Dendritic cell treated with granulocyte-macrophage colony-stimulating factor and Interleukin-4, amounts not matched to agents 40 ng/mL and 50 ng/mL, for 4 days (primary cell): ENCODE measurements at regions of chr12 and their contacts with region 1.

Region 1: GRCh38 chr12:111685744-111686517 is at the starts of genes ACAD10 and BRAP:
- H3K4me3 Mint-ChIP-seq: peak within 1 kb of the TSS; percentile 95
- H3K27ac Mint-ChIP-seq: peak within 1 kb of the TSS; percentile 96
- H3K4me1 Mint-ChIP-seq: peaks cover 24% of the 10 kb centered on the region
- H3K27me3 Mint-ChIP-seq: no peaks in the 10 kb centered on the region

Region 2: GRCh38 chr12:111505601-111506036 is 180.3 kb before region 1 on chr12:
- intact Hi-C with region 1: no loop called
- H3K4me3 Mint-ChIP-seq: no peak overlapping the region
- H3K27ac Mint-ChIP-seq: no peak overlapping the region
- H3K4me1 Mint-ChIP-seq: no peaks in the 10 kb centered on the region
- H3K27me3 Mint-ChIP-seq: no peaks in the 10 kb centered on the region

Region 3: GRCh38 chr12:111599459-111600204 is 86.3 kb before region 1 on chr12:
- intact Hi-C with region 1: loop called (anchors 10 kb)
- H3K4me3 Mint-ChIP-seq: peak overlapping the region; percentile 88
- H3K27ac Mint-ChIP-seq: peak overlapping the region; percentile 87
- H3K4me1 Mint-ChIP-seq: peaks cover 35% of the 10 kb centered on the region
- H3K27me3 Mint-ChIP-seq: no peaks in the 10 kb centered on the region

Region 4: GRCh38 chr12:111705672-111706071 is 19.7 kb after region 1 on chr12:
- intact Hi-C with region 1: no loop called
- H3K4me3 Mint-ChIP-seq: no peak overlapping the region
- H3K27ac Mint-ChIP-seq: no peak overlapping the region
- H3K4me1 Mint-ChIP-seq: no peaks in the 10 kb centered on the region
- H3K27me3 Mint-ChIP-seq: no peaks in the 10 kb centered on the region

Region 5: DNA sequence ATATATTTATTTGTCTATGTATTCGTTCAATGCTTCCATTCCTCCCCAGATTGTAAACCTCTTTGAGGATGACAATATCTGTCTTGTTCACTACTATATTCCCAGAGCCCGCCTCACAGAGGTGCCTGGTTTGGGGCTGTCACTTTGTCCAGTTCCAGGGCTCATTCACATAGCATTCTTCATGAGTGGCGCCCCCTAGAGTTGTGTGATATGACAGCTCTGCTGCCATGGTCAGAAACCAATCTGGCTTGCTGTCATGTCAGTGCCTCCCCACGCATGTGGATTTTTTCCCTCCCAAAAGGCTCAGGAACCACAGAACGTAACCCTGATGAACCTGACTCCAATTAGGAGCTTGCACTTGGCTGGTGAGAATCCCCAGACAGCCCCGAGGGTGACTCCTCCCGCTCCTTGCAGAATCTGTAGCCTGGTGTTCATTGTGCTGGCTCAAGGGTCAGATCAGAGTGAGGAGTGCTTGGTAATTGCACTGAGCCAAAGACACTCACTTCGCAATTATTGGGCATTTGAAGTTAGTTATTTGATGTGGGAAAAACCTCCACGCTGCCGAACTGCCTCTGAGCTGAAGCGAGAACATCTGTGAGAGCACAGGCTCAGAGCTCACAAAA is 878.3 kb after region 1 on chr12:
- intact Hi-C with region 1: no loop called
- H3K4me3 Mint-ChIP-seq: no peak overlapping the region
- H3K27ac Mint-ChIP-seq: no peak overlapping the region
- H3K4me1 Mint-ChIP-seq: no peaks in the 10 kb centered on the region
- H3K27me3 Mint-ChIP-seq: peaks cover 7% of the 10 kb centered on the region